Activated CD4-positive, alpha-beta T cell treated with anti-CD3 and anti-CD28 coated beads, Interleukin-2, amount 10 ng/mL, durations not matched to agents 24 days and 14 days (primary cell): ENCODE measurements at regions of chr9 and their contacts with region 1.

Region 1: DNA sequence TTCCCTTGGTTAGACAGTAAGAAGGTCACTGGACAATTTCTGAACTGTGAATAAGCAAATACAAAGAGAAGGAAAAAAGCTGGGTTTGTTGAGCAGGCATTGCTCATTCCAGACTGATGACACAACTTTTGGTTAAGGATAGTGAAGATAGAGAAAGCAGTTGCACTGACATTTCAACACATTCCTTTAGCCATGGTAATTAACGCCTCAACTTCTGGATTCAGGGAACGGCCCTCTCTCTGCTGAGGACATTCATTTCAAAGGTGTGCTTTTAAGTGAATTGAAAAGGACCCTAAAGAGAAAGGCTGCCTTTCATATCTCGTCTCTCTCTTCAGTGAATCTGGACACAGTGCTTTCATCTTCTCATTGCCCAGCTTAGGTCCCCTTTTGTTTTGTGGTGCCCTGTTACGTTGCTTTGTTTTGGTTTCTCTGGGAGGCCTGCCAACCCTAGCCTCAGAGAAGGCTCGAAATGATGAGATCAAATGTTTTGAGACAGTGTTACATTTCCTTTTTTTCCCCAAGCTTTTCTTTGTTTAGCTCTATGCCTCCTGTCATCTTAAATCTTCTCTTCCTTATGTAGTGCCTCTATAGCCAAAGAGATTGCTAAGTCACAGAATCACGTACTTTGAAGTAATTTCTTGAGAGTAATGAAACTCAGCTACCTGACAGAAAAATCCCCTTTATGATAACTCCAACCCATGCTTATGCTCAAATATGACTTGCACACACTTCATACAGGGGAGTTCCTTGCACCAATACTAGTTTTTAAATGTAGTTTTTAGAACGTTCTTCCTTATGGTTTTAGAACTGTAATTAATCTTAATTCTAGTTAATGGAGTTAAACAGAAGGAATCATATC is 94.4 kb upstream of the IFNE start:
- DNase-seq: peak; percentile 72
- H3K4me3 Mint-ChIP-seq: peak overlapping the region; percentile 7
- H3K27ac Mint-ChIP-seq: no peak overlapping the region
- H3K4me1 Mint-ChIP-seq: peaks cover 29% of the 10 kb centered on the region
- H3K27me3 Mint-ChIP-seq: peaks cover 27% of the 10 kb centered on the region

Region 2: GRCh38 chr9:21559424-21560280 is 16.9 kb before region 1 on chr9:
- intact Hi-C with region 1: loop called (anchors 1 kb)
- DNase-seq: peak; percentile 84
- H3K4me3 Mint-ChIP-seq: peak overlapping the region; percentile 85
- H3K27ac Mint-ChIP-seq: no peak overlapping the region
- H3K4me1 Mint-ChIP-seq: peaks cover 17% of the 10 kb centered on the region
- H3K27me3 Mint-ChIP-seq: peaks cover 60% of the 10 kb centered on the region

Region 3: GRCh38 chr9:21591221-21592062 is 14.9 kb after region 1 on chr9:
- intact Hi-C with region 1: loop called (anchors 1 kb)
- DNase-seq: peak; percentile 79
- H3K4me3 Mint-ChIP-seq: peak overlapping the region; percentile 1
- H3K27ac Mint-ChIP-seq: peak overlapping the region; percentile 15
- H3K4me1 Mint-ChIP-seq: peaks cover 16% of the 10 kb centered on the region
- H3K27me3 Mint-ChIP-seq: peaks cover 10% of the 10 kb centered on the region

Region 4: GRCh38 chr9:21616082-21616778 is 39.7 kb after region 1 on chr9:
- intact Hi-C with region 1: loop called (anchors 2 kb)
- DNase-seq: no peak
- H3K4me3 Mint-ChIP-seq: no peak overlapping the region
- H3K27ac Mint-ChIP-seq: no peak overlapping the region
- H3K4me1 Mint-ChIP-seq: peaks cover 26% of the 10 kb centered on the region
- H3K27me3 Mint-ChIP-seq: no peaks in the 10 kb centered on the region

Region 5: DNA sequence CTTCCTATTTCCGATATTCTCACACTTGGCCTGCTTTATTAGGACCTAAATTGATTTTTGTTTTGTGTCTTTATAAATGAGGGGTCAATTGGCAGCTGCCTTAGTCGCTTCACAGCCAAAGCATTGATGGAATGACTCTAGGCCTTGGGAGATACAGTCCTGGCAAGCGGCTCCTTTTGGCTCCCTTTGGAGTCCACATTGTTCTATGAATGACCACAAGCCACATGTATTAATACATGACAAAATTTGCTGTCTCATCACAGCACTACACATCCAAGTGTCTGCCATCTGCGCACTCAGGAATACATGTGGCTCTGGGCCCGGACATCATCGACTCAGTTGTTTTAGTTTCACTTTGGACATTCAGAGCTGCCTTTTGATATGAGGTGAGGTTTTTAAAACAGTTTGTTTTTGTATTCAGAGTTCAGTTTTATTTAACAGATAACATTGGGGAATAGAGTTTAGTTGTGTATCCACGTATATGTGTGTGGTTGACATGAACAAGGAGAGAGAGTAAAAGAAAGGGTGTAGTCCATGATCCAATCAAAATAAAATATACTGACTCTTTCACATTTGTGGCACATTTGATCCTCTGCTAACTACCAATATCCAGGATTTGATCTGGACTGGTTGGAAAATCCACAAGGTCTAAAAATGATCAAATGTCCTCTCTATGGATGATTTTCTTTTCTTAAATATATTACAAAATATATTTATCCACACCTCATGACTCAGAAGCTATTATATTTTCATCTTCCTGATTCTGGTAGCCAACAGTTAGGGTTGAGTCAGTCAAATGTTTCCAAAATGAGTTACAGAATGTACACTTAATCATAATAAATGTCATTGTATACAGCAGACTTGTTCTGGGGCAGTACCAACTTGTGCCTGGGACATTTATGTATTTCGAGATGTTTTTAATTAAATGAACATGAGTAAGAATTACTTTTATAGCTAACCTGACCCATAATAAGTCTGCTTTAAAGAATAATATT is 111.8 kb after region 1 on chr9:
- intact Hi-C with region 1: loop called (anchors 5 kb)
- DNase-seq: no peak
- H3K4me3 Mint-ChIP-seq: no peak overlapping the region
- H3K27ac Mint-ChIP-seq: no peak overlapping the region
- H3K4me1 Mint-ChIP-seq: peaks cover 24% of the 10 kb centered on the region
- H3K27me3 Mint-ChIP-seq: peaks cover 15% of the 10 kb centered on the region